ENCODE measurements at regions of chr15 and their contacts with region 1.

Region 1: DNA sequence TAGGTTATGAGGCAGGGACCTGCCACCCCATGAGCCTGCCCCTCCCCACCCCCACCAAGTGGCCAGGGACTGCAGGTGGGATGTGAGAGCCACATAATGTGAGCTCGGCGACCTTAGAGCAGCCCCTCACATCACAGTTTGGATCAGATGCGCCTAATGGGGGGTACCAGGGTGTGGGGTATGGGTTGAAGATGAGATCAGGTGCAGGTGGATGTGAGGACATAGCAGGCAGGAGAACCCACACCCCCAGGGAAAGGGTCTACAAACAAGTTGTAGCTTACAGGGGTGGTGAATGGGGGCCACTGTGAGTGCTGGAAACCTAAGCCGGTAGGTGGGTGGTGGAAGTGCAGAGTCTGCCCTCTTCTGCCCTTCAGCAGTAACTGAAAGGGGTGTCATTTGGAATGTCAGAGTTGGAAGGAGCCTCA is 94.0 kb downstream of the CORO2B start:
- DNase-seq: no peak
- H3K4me3 ChIP-seq: no peak overlapping the region
- H3K27ac ChIP-seq: no peak overlapping the region
- H3K4me1 ChIP-seq: peaks cover 2% of the 10 kb centered on the region
- H3K27me3 ChIP-seq: no peaks in the 10 kb centered on the region
- CTCF ChIP-seq: no peak

Region 2: GRCh38 chr15:68550481-68551295 is 122.1 kb before region 1 on chr15:
- intact Hi-C with region 1: loop called (anchors 2 kb)
- DNase-seq: peak; percentile 77
- H3K4me3 ChIP-seq: no peak overlapping the region
- H3K27ac ChIP-seq: no peak overlapping the region
- H3K4me1 ChIP-seq: no peaks in the 10 kb centered on the region
- H3K27me3 ChIP-seq: no peaks in the 10 kb centered on the region
- CTCF ChIP-seq: peak; percentile 92

Region 3: GRCh38 chr15:68578174-68578979 is 94.4 kb before region 1 on chr15:
- intact Hi-C with region 1: loop called (anchors 5 kb)
- DNase-seq: peak; percentile 42
- H3K4me3 ChIP-seq: peak overlapping the region; percentile 50
- H3K27ac ChIP-seq: no peak overlapping the region
- H3K4me1 ChIP-seq: peaks cover 5% of the 10 kb centered on the region
- H3K27me3 ChIP-seq: peaks cover 22% of the 10 kb centered on the region
- CTCF ChIP-seq: no peak

Region 4: DNA sequence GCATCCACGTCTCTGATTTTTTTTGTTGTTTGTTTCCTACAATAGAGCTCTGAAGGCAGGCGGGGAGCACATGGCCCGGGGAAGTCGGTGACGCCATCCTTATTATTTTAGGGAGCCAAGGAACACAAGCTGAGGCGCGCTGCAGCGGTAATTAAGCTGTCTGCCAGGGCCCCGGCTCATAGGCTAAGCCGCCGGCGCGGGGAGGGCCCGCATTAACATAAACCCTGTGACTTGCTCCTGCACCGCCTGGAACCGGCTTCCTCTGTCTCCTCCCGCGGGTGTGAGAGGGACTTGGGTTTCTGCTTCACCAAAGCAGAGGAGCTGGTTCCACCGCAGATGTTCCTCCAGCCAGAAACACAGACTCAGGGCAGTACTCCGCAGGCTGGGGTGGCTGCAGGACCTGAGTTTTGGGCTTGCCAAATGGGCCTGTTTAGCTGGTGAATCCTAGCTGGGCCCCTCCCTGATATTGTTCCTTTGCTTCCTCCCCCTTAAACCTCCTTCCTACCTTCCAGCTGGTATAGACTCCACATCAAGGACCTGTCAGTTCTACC is 122.6 kb after region 1 on chr15:
- intact Hi-C with region 1: no loop called
- DNase-seq: peak; percentile 93
- H3K4me3 ChIP-seq: no peak overlapping the region
- H3K27ac ChIP-seq: peak overlapping the region; percentile 52
- H3K4me1 ChIP-seq: peaks cover 20% of the 10 kb centered on the region
- H3K27me3 ChIP-seq: no peaks in the 10 kb centered on the region
- CTCF ChIP-seq: no peak